ENCODE measurements at regions of chr5 and their contacts with region 1.

Region 1: GRCh38 chr5:129593525-129593924 is 133.4 kb downstream of the ADAMTS19 start:
- DNase-seq: no peak
- H3K4me3 Mint-ChIP-seq: no peak overlapping the region
- H3K27ac Mint-ChIP-seq: no peak overlapping the region
- H3K4me1 Mint-ChIP-seq: peaks cover 10% of the 10 kb centered on the region
- H3K27me3 Mint-ChIP-seq: no peaks in the 10 kb centered on the region
- CTCF ChIP-seq: no peak

Region 2: GRCh38 chr5:129074903-129075302 is 518.6 kb before region 1 on chr5:
- CTCF ChIA-PET with region 1: no interaction called
- intact Hi-C with region 1: no loop called
- DNase-seq: no peak
- H3K4me3 Mint-ChIP-seq: no peak overlapping the region
- H3K27ac Mint-ChIP-seq: no peak overlapping the region
- H3K4me1 Mint-ChIP-seq: no peaks in the 10 kb centered on the region
- H3K27me3 Mint-ChIP-seq: no peaks in the 10 kb centered on the region
- CTCF ChIP-seq: no peak

Region 3: DNA sequence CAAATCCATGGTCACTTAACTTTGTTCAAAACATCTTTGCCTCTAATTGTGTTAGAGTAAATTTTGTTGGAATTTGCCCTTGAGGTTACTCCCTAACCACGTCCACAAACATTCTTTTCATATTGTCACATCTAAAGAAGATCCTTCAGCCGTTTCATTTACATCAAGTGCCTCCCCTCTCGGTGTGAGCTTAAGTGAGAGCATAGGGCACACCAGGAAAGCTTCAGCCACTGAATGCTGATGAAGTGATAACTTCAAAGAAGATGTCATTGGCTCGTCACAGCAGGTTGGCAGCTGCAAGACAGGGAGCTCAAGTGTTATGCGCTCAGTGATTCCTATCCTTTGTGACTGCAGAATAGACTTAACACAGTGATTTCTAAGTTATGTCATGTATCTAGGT is 183.0 kb before region 1 on chr5:
- CTCF ChIA-PET with region 1: no interaction called
- intact Hi-C with region 1: loop called (anchors 5 kb)
- DNase-seq: no peak
- H3K4me3 Mint-ChIP-seq: no peak overlapping the region
- H3K27ac Mint-ChIP-seq: no peak overlapping the region
- H3K4me1 Mint-ChIP-seq: no peaks in the 10 kb centered on the region
- H3K27me3 Mint-ChIP-seq: no peaks in the 10 kb centered on the region
- CTCF ChIP-seq: no peak

Region 4: GRCh38 chr5:129460936-129461711 is 132.4 kb before region 1 on chr5:
- CTCF ChIA-PET with region 1: no interaction called
- intact Hi-C with region 1: no loop called
- DNase-seq: peak; percentile 90
- H3K4me3 Mint-ChIP-seq: peak overlapping the region; percentile 78
- H3K27ac Mint-ChIP-seq: no peak overlapping the region
- H3K4me1 Mint-ChIP-seq: peaks cover 9% of the 10 kb centered on the region
- H3K27me3 Mint-ChIP-seq: peaks cover 9% of the 10 kb centered on the region
- CTCF ChIP-seq: peak; percentile 77

Region 5: GRCh38 chr5:129609710-129610109 is 16.2 kb after region 1 on chr5:
- CTCF ChIA-PET with region 1: no interaction called
- intact Hi-C with region 1: loop called (anchors 2 kb)
- DNase-seq: no peak
- H3K4me3 Mint-ChIP-seq: no peak overlapping the region
- H3K27ac Mint-ChIP-seq: no peak overlapping the region
- H3K4me1 Mint-ChIP-seq: no peaks in the 10 kb centered on the region
- H3K27me3 Mint-ChIP-seq: no peaks in the 10 kb centered on the region
- CTCF ChIP-seq: no peak

Measured in Calu3 (cell line).